Right lobe of liver (tissue), 6 donors: ENCODE measurements at regions of chr6 and their contacts with region 1.

Region 1: DNA sequence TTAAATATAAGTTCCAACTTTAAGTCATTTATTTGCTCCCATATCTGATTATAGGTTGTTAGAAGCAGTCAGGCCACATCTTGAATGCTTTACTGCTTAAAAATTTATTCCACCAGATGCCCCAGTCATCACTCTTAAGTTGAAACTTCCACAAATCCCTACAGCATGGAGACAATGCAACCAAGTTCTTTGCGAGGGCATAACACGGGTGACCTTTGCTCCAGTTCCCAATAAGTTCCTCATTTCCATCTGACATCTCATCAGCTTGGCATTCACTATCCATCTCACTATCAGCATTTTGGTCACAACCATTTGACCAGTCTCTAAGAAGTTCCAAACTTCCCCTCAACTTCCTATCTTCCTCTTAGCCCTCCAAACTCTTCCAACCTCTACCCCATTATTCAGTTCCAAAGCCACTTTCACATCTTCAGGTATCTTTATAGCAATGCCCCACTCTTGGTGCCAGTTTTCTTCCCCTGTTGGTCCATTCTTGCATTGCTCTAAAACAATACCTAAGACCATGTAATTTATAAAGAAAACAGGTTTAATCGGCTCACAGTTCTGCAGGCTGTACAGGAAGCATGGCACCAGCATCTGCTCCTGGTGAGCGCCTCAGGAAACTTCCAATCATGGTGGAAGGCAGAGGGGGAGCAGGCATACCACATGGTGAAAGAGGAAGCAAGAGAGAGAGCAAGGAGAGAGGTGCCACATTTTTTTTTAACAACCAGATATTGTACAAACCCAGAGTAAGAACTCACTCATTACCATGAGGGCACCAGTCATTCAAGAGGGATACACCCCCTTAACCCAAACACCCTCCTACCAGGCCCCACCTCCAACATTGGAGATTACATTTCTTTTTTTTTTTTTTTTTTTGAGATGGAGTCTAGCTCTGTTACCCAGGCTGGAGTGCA is 15.9 kb upstream of the ITPR3 start:
- DNase-seq: no peak
- ATAC-seq: no peak
- H3K4me3 ChIP-seq: no peak overlapping the region
- H3K27ac ChIP-seq: no peak overlapping the region
- H3K4me1 ChIP-seq: no peaks in the 10 kb centered on the region
- H3K27me3 ChIP-seq: no peaks in the 10 kb centered on the region
- CTCF ChIP-seq: no peak
- POLR2A ChIP-seq: no peak

Region 2: DNA sequence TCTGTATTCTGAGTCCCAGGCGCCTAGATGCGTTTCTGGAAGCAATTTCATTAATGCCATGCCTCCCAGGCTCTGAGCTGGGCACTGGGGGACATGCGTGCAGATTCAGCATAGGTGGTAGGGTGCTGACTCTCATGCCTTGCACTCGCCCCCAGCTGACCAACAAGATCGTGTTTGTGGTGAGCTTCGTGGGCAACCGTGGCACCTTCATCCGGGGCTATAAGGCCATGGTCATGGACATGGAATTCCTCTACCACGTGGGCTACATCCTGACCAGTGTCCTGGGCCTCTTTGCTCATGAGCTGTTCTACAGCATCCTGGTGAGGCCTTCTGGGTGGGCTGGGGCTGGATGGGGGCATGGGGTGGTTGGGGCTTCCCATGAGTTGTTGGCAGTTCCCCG is 84.7 kb after region 1 on chr6:
- intact Hi-C with region 1: loop called in 1 of 2 experiments (anchors 5 kb)
- DNase-seq: peak in 1 of 3 donors; percentile 18
- ATAC-seq: no peak
- H3K4me3 ChIP-seq: no peak overlapping the region
- H3K27ac ChIP-seq: no peak overlapping the region
- H3K4me1 ChIP-seq: no peaks in the 10 kb centered on the region
- H3K27me3 ChIP-seq: no peaks in the 10 kb centered on the region
- CTCF ChIP-seq: no peak
- POLR2A ChIP-seq: no peak